Esophagus squamous epithelium (tissue), 5 donors: ENCODE measurements at regions of chr17 and their contacts with region 1.

Region 1: DNA sequence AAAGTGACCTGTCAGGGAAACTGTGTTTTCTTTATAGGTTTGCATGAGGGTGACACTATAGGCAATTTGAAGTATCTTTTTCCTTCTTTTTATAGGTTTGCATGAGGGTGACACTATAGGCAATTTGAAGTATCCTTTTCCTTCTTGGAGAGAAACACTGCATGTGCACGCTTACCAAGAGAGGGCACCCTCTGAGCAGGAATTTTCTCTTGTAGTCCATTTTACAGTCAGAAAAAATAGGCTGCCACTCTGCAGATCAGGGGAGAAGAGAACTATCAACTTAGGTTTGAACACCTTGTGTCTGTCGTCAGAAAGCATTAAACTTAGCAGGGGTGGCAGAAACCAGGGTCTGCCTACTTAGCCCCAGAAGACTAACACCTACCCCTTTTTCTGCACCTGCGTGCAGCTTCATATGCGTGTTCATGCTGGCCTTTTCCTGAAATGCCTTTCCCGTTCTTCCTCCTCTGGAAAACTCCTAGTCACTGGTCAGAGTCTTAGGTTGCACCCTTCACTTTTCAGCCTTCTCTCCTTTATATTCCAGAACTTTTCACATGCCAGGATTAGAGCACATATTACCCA is 16.4 kb upstream of the SMIM36 start:
- DNase-seq: no peak
- H3K4me3 ChIP-seq: no peak overlapping the region
- H3K27ac ChIP-seq: no peak overlapping the region
- H3K4me1 ChIP-seq: no peaks in the 10 kb centered on the region
- H3K27me3 ChIP-seq: no peaks in the 10 kb centered on the region
- CTCF ChIP-seq: peak in 4 of 6 experiments; percentile 42 to 53 (median 50)
- POLR2A ChIP-seq: no peak

Region 2: GRCh38 chr17:55601874-55602364 is 74.3 kb after region 1 on chr17:
- intact Hi-C with region 1: loop called (anchors 5 kb)
- DNase-seq: no peak
- H3K4me3 ChIP-seq: no peak overlapping the region
- H3K27ac ChIP-seq: no peak overlapping the region
- H3K4me1 ChIP-seq: no peaks in the 10 kb centered on the region
- H3K27me3 ChIP-seq: no peaks in the 10 kb centered on the region
- CTCF ChIP-seq: peak; percentile 18 to 71 (median 58)
- POLR2A ChIP-seq: no peak

Region 3: GRCh38 chr17:55717898-55718735 is 190.5 kb after region 1 on chr17:
- intact Hi-C with region 1: loop called (anchors 5 kb)
- DNase-seq: no peak
- H3K4me3 ChIP-seq: no peak overlapping the region
- H3K27ac ChIP-seq: no peak overlapping the region
- H3K4me1 ChIP-seq: peaks cover 0 to 18% (median 0%) of the 10 kb centered on the region in 3 donors
- H3K27me3 ChIP-seq: no peaks in the 10 kb centered on the region
- CTCF ChIP-seq: peak; percentile 62 to 79 (median 68)
- POLR2A ChIP-seq: no peak

Region 4: GRCh38 chr17:55770148-55770870 is 242.7 kb after region 1 on chr17:
- intact Hi-C with region 1: loop called (anchors 5 kb)
- DNase-seq: no peak
- H3K4me3 ChIP-seq: no peak overlapping the region
- H3K27ac ChIP-seq: peak overlapping the region in 3 of 4 donors; percentile 24 to 76 (median 63)
- H3K4me1 ChIP-seq: peaks cover 0 to 25% (median 11%) of the 10 kb centered on the region in 3 donors
- H3K27me3 ChIP-seq: no peaks in the 10 kb centered on the region
- CTCF ChIP-seq: peak; percentile 47 to 66 (median 56)
- POLR2A ChIP-seq: no peak